Activated CD4-positive, alpha-beta T cell treated with anti-CD3 and anti-CD28 coated beads, Interleukin-2, amount 10 ng/mL, durations not matched to agents 24 days and 14 days (primary cell): ENCODE measurements at regions of chr10 and their contacts with region 1.

Region 1: GRCh38 chr10:6518791-6519429 is 61.2 kb downstream of the PRKCQ start:
- DNase-seq: peak; percentile 74
- H3K4me3 Mint-ChIP-seq: peak overlapping the region; percentile 55
- H3K27ac Mint-ChIP-seq: peak overlapping the region; percentile 68
- H3K4me1 Mint-ChIP-seq: peaks cover 61% of the 10 kb centered on the region
- H3K27me3 Mint-ChIP-seq: no peaks in the 10 kb centered on the region

Region 2: DNA sequence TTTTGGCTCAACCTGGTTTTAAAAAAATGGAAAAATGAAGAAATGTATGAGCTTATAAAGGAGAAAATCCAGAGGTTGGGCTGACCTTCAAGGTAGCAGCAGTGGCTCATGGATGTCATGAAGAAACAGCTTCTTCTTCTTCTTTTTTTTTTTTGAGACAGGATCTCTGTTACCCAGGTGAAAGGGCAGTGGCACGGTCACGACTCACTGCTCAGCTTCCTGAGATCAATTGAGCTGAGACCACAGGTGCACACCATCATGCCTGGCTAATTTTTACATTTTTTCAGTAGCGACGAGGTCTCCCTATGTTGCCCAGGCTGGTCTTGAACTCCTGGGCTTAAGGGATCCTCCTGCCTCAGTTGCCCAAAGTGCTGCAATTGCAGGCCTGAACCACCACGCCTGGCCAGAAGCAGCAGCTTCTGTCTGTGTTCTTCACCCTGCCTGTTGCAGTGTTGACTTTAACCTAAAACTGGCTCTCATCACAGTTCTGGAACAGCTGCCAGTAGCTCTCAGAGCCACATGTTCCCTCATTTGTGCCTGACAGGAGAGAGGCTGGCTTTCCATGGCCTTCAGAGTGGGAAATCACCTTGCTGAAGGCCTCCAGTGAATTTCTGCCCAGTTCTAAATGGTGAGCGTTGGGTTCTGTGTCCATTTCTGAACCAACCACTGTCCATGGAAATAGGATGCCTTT is 198.4 kb before region 1 on chr10:
- intact Hi-C with region 1: no loop called
- DNase-seq: no peak
- H3K4me3 Mint-ChIP-seq: no peak overlapping the region
- H3K27ac Mint-ChIP-seq: no peak overlapping the region
- H3K4me1 Mint-ChIP-seq: peaks cover 2% of the 10 kb centered on the region
- H3K27me3 Mint-ChIP-seq: no peaks in the 10 kb centered on the region

Region 3: GRCh38 chr10:6530211-6530840 is 11.4 kb after region 1 on chr10:
- intact Hi-C with region 1: loop called (anchors 1 kb)
- DNase-seq: peak; percentile 94
- H3K4me3 Mint-ChIP-seq: peak overlapping the region; percentile 89
- H3K27ac Mint-ChIP-seq: peak overlapping the region; percentile 99
- H3K4me1 Mint-ChIP-seq: peaks cover 78% of the 10 kb centered on the region
- H3K27me3 Mint-ChIP-seq: no peaks in the 10 kb centered on the region

Region 4: DNA sequence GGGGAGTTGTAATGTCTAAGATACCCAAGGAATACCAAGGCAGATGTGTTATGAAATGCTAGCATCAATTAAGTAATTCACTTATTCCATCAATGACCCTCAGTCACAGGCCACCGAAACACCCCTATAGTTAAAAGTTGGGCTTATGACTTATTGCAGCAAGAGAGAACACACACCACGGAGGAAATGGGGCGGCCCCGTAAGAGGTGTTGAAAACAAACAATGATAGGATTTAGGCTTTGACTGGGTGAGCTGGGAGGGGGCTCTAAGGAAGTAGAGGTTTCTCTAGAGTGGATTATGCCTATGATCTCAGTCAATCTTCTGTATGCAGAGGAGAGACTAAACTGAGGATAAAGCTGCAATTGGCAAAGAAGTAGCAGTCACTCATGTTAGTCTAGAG is 106.5 kb after region 1 on chr10:
- intact Hi-C with region 1: no loop called
- DNase-seq: no peak
- H3K4me3 Mint-ChIP-seq: no peak overlapping the region
- H3K27ac Mint-ChIP-seq: no peak overlapping the region
- H3K4me1 Mint-ChIP-seq: peaks cover 9% of the 10 kb centered on the region
- H3K27me3 Mint-ChIP-seq: no peaks in the 10 kb centered on the region